H1 (cell line): ENCODE measurements at regions of chr22 and their contacts with region 1.

Region 1: GRCh38 chr22:24175160-24175808 is 6.0 kb upstream of the SUSD2 start:
- DNase-seq: peak; percentile 46 to 94
- H3K4me3 ChIP-seq: no peak overlapping the region
- H3K27ac ChIP-seq: no peak overlapping the region
- H3K4me1 ChIP-seq: no peaks in the 10 kb centered on the region; a peak in 1 of 7 replicates
- H3K27me3 ChIP-seq: no peaks in the 10 kb centered on the region
- CTCF ChIP-seq: peak; percentile 94 to 97 (median 94)
- EP300 ChIP-seq: peak in 1 of 2 experiments; percentile 13; a peak in 1 of 3 replicates
- POLR2A ChIP-seq: no peak
- RAD21 ChIP-seq: peak; percentile 84 to 92

Region 2: DNA sequence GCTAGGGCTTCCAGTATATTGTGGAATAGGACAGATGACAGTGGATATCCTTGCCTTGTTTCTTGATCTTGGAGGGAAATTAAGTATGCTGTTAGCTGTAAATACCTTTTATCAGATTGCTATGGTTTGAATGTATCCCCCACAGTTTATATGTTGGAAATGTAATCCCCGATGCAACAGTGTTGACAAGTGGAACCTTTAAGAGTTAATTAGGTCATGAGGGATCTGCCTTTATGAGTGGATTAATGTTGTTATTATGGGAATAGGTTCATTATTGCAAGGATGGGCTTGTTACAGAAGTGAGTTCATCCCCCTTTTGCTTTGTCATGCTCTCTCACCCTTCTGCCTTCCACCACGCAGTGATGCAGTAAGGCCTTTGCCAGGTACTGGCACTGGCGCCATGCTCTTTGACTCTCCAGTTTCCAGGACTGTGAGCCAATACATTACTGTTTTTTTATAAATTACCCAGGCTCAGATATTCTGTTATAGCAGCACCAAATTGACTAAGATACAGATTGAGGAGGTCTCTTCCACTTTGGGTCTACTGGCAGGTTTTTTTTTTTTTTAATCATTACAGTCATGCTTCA is 147.8 kb before region 1 on chr22:
- CTCF ChIA-PET with region 1: no interaction called
- POLR2A ChIA-PET with region 1: no interaction called
- DNase-seq: no peak
- H3K4me3 ChIP-seq: no peak overlapping the region
- H3K27ac ChIP-seq: no peak overlapping the region
- H3K4me1 ChIP-seq: no peaks in the 10 kb centered on the region; a peak in 1 of 7 replicates
- H3K27me3 ChIP-seq: no peaks in the 10 kb centered on the region
- CTCF ChIP-seq: no peak
- EP300 ChIP-seq: no peak
- POLR2A ChIP-seq: no peak
- RAD21 ChIP-seq: no peak

Region 3: DNA sequence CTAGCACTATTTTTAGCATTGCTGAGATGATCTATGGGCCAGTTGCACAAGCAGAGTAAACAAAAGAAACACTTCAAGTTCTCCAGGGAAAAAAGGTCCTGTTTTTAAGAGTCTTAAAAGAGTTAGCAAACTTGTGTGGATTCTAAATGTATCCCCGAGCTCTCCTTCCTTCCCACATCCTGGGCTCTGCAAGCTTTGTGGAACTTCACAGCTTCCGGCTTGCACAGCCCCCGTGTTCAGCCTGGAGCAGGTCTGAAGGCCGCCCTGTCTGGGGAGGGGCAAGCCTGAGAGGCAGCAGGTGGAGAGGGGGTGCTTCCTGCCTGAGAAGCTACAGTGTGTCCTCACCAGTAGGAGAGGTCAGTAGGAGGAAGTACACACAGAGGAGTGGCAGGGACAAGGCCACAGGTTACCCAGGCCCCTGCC is 29.1 kb before region 1 on chr22:
- CTCF ChIA-PET with region 1: interaction called, 11 read pairs
- POLR2A ChIA-PET with region 1: interaction called, 4 read pairs
- DNase-seq: peak in 1 of 2 experiments; percentile 65
- H3K4me3 ChIP-seq: no peak overlapping the region
- H3K27ac ChIP-seq: no peak overlapping the region
- H3K4me1 ChIP-seq: peaks cover 5 to 19% (median 11%) of the 10 kb centered on the region in 4 experiments
- H3K27me3 ChIP-seq: no peaks in the 10 kb centered on the region
- CTCF ChIP-seq: no peak
- EP300 ChIP-seq: no peak
- POLR2A ChIP-seq: no peak
- RAD21 ChIP-seq: no peak

Region 4: DNA sequence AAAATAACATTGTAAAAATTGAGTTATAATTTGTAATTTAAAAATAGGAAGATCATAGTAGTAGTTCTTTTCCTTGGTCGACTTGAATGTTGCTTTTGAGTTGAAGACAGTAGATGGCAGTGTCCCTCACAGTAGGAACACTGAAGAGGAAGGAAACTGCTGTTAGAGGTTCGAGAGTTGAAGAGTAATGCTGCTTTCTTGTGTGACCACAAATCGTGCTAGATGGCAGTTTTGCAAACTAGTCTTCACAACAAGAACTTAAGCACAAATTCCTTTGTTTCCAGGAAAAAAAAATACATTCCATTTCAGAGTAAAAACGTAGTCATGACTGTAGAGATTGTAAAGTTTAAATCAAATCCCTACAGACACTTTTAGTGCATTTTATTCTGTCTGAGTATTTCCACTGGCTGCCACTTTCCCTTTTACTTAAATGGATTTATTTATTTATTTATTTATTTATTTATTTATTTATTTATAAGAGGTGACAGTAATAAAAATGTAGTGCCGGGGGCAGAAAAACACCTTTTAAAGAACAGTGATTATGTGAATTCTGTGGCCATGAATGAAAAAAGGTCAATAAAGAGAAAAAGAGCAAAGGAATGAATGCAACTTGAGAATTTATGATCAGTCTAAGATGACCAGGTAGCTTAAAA is 149.9 kb after region 1 on chr22:
- CTCF ChIA-PET with region 1: no interaction called
- POLR2A ChIA-PET with region 1: no interaction called
- DNase-seq: no peak
- H3K4me3 ChIP-seq: no peak overlapping the region
- H3K27ac ChIP-seq: no peak overlapping the region
- H3K4me1 ChIP-seq: no peaks in the 10 kb centered on the region
- H3K27me3 ChIP-seq: no peaks in the 10 kb centered on the region
- CTCF ChIP-seq: peak in 2 of 3 experiments; percentile 55 to 57; a peak in 3 of 4 replicates
- EP300 ChIP-seq: no peak
- POLR2A ChIP-seq: no peak
- RAD21 ChIP-seq: peak; percentile 66 to 71